Endothelial cell of umbilical vein (primary cell): ENCODE measurements at regions of chr12 and their contacts with region 1.

Region 1: GRCh38 chr12:12724661-12725545 is 7.7 kb downstream of the CDKN1B start:
- DNase-seq: peak; percentile 98
- H3K4me3 ChIP-seq: peak overlapping the region; percentile 13 to 97 (median 95)
- H3K27ac ChIP-seq: peak overlapping the region; percentile 98
- H3K4me1 ChIP-seq: peaks cover 38% of the 10 kb centered on the region
- H3K27me3 ChIP-seq: no peaks in the 10 kb centered on the region
- CTCF ChIP-seq: no peak
- POLR2A ChIP-seq: peak; percentile 75

Region 2: DNA sequence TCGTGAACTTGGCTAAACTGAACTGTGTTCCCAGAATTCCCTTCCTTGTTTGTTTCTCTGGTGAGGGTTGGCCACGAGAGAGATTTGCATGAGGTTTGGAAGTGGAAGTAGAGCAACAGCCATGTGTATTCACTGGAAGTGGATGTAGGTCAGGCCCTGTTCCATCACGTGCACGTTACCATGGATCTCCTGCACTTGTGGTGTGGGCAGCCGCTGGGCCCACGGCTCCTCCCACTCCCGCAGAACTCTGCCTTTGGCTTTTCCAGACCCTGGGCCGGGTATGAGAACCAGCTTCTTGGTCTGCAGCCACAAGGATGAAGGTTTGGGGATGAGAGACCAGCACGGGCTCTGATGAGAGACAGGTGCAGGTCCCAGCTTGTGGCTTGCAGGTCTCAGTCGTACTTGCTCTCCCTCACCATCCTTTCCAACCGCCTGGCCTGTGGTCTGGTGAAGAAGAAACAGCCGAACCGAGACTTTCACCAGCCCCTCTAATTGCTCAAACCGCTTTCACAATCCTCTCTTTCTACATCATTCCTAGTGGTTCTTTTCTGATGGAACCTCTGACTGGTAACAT is 257.1 kb before region 1 on chr12:
- CTCF ChIA-PET with region 1: no interaction called
- POLR2A ChIA-PET with region 1: no interaction called
- dilution Hi-C with region 1: no loop called
- intact Hi-C with region 1: no loop called
- DNase-seq: no peak
- H3K4me3 ChIP-seq: no peak overlapping the region
- H3K27ac ChIP-seq: no peak overlapping the region
- H3K4me1 ChIP-seq: no peaks in the 10 kb centered on the region
- H3K27me3 ChIP-seq: no peaks in the 10 kb centered on the region
- CTCF ChIP-seq: no peak
- POLR2A ChIP-seq: no peak

Region 3: GRCh38 chr12:12673296-12673695 is 51.6 kb before region 1 on chr12:
- CTCF ChIA-PET with region 1: no interaction called
- POLR2A ChIA-PET with region 1: no interaction called
- dilution Hi-C with region 1: no loop called
- intact Hi-C with region 1: no loop called
- DNase-seq: no peak
- H3K4me3 ChIP-seq: no peak overlapping the region
- H3K27ac ChIP-seq: no peak overlapping the region
- H3K4me1 ChIP-seq: no peaks in the 10 kb centered on the region
- H3K27me3 ChIP-seq: peaks cover 3 to 8% of the 10 kb centered on the region in 2 experiments
- CTCF ChIP-seq: no peak
- POLR2A ChIP-seq: no peak

Region 4: DNA sequence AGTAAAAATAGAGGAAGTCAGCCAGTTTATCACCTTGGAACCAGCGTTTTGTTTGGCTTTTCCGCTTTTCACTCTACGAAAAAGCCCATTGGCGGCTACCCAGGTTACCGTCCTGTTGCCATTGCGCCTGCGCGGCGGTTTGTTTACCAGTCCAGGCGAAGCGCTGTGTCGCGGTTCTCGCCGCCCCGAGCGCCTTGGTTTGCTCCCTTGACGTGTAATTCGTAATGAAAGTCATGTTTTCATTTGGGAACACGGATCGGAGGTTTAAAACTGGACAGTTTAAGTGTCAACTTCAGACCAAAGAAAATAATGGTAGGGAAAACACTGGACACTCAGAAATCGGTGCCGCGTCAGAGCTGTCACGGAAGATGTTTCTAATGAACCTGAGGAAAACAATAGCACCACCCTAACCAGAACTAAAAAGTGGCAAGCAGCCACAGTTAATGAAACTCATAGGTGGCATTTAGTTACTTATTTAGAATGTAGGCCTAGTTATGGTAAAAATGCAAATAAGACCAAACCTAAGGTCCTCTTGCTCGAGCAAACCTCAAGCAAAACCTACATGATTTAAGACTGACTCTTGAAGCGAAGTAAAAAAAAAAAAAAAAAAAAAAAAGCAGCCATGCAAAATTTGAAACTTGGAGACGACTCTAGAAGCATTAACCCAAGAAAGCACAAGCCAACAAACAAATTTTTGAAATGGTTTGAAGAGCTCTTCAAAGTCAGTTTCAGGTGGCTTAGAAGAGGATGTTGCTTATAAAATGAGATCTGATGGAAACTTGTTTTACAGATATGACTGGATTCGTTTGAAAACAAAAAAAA is 28.1 kb before region 1 on chr12:
- CTCF ChIA-PET with region 1: no interaction called
- POLR2A ChIA-PET with region 1: no interaction called
- dilution Hi-C with region 1: no loop called
- intact Hi-C with region 1: loop called (anchors 1 kb)
- DNase-seq: peak; percentile 92
- H3K4me3 ChIP-seq: peak overlapping the region; percentile 45 to 98 (median 88)
- H3K27ac ChIP-seq: peak overlapping the region; percentile 98
- H3K4me1 ChIP-seq: peaks cover 9% of the 10 kb centered on the region
- H3K27me3 ChIP-seq: no peaks in the 10 kb centered on the region
- CTCF ChIP-seq: no peak
- POLR2A ChIP-seq: peak; percentile 61

Region 5: DNA sequence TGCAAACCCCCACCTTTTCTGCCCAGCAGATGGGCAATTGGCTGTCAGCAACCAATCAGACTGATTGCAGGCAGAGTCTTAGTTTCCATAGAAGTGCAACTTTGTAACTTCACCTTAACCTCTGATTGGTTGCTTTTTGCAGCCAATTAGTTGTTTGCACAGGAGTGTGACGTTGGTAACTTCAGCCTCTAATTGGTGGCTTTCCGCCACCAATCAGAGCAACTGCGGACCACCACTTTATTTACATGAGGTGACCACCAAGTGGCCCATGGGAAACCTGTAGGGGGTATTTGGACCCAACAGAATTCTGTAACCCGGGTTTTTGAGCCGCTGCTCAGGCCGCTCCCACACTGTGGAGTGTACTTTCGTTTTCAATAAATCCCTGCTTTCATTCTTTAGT is 24.5 kb after region 1 on chr12:
- CTCF ChIA-PET with region 1: no interaction called
- POLR2A ChIA-PET with region 1: no interaction called
- dilution Hi-C with region 1: no loop called
- intact Hi-C with region 1: no loop called
- DNase-seq: no peak
- H3K4me3 ChIP-seq: no peak overlapping the region
- H3K27ac ChIP-seq: no peak overlapping the region
- H3K4me1 ChIP-seq: no peaks in the 10 kb centered on the region
- H3K27me3 ChIP-seq: no peaks in the 10 kb centered on the region
- CTCF ChIP-seq: no peak
- POLR2A ChIP-seq: no peak

Region 6: GRCh38 chr12:12899530-12900380 is 174.9 kb after region 1 on chr12:
- CTCF ChIA-PET with region 1: no interaction called
- POLR2A ChIA-PET with region 1: no interaction called
- dilution Hi-C with region 1: no loop called
- intact Hi-C with region 1: loop called (anchors 5 kb)
- DNase-seq: peak; percentile 81
- H3K4me3 ChIP-seq: no peak overlapping the region
- H3K27ac ChIP-seq: peak overlapping the region; percentile 91
- H3K4me1 ChIP-seq: peaks cover 49% of the 10 kb centered on the region
- H3K27me3 ChIP-seq: no peaks in the 10 kb centered on the region
- CTCF ChIP-seq: no peak
- POLR2A ChIP-seq: no peak

Region 7: DNA sequence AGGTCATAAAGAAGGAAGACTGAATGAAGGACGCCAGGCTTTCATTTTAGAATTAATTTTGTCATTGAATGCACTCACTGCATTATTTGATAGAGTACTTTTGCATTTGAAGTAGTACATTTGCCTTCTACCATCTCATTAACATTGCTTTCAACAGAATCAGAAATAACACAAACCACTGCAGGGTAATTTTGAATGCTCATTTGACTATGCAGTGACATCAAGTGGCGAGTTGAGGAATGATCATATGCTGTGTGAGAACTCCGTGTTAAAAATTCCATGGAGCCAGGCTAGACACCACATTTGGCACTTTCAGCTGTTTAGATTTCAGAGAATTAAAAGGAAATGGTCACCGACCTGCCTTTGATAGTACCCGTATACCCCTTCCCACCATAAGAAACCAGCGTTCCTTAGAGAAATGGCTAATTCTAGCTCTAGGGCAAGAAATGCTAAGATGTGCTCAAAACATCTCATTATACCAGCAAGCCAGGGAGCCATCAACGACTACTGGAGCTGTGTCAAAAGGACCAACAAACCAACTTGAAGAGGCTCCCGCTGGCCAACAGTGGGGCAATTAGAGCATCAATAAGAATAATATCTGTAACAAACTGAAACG is 258.6 kb after region 1 on chr12:
- CTCF ChIA-PET with region 1: interaction called, 3 read pairs
- POLR2A ChIA-PET with region 1: no interaction called
- dilution Hi-C with region 1: no loop called
- intact Hi-C with region 1: loop called (anchors 2 kb)
- DNase-seq: peak; percentile 78
- H3K4me3 ChIP-seq: no peak overlapping the region
- H3K27ac ChIP-seq: peak overlapping the region; percentile 25
- H3K4me1 ChIP-seq: peaks cover 20% of the 10 kb centered on the region
- H3K27me3 ChIP-seq: no peaks in the 10 kb centered on the region
- CTCF ChIP-seq: peak; percentile 56 to 60
- POLR2A ChIP-seq: no peak